K562 (cell line): ENCODE measurements at regions of chr9 and their contacts with region 1.

Region 1: DNA sequence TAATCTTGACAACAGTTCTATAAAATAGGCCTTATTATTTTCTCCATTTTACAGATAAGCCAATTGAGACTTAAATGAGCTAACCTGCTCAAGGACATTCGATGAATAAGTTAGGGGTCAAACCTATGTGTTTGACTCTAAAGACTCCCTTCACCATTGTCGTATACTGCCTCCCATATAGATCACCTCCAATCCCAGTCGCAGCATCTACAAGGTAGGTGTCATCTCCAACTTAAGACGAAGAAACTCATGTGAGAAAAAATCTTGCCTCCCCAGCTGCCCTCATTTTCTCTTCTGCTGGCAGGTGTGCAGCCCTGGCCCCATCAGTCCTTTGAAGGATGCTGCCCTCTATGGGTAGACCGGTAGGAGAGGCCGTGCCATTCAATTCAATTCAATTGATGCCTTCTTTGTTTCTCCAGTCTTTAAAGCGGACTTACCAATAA is 75.2 kb upstream of the SMARCA2 start:
- DNase-seq: peak in 3 of 4 experiments; percentile 7 to 26 (median 12)
- ATAC-seq: peak; percentile 76
- H3K4me3 ChIP-seq: no peak overlapping the region
- H3K27ac ChIP-seq: no peak overlapping the region
- H3K4me1 ChIP-seq: no peaks in the 10 kb centered on the region
- H3K27me3 ChIP-seq: no peaks in the 10 kb centered on the region
- CTCF ChIP-seq: peak; percentile 41 to 57 (median 51)
- EP300 ChIP-seq: no peak
- POLR2A ChIP-seq: no peak
- RAD21 ChIP-seq: peak; percentile 7 to 43; a peak in 2 of 4 replicates

Region 2: DNA sequence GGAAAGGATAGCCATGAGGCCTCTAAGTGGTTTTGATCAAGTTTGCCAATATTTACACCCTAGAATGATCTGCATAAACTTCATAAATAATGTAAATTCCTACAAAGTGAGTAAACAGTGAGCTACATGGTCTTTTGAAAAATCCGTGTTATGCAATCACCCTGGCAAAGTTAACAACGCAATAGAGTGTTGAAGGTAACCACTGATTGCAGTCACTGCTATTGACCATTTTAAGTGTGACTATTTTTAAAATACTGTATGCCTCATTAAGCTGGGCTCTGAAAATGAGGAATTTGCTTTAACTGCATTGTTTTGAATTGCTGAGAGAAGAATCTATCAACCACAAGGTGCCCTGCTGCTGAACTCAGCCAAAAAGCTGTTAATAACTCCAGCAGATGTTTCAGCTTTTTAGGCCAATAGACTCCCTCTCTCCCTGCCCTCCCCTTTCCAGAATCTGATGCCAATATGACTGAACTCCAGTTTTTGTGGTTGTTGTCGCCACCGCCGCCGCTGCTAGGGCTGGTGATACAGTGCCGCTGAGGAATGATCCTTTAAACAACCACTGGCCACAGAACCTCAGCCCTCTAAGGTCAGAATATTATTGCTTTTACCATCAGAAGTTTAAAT is 39.9 kb after region 1 on chr9:
- CTCF ChIA-PET with region 1: no interaction called
- POLR2A ChIA-PET with region 1: no interaction called
- in situ Hi-C with region 1: no loop called
- intact Hi-C with region 1: no loop called
- DNase-seq: no peak
- ATAC-seq: no peak
- H3K4me3 ChIP-seq: no peak overlapping the region
- H3K27ac ChIP-seq: no peak overlapping the region
- H3K4me1 ChIP-seq: no peaks in the 10 kb centered on the region
- H3K27me3 ChIP-seq: no peaks in the 10 kb centered on the region; a peak in 2 of 5 replicates
- CTCF ChIP-seq: no peak
- EP300 ChIP-seq: no peak
- POLR2A ChIP-seq: no peak
- RAD21 ChIP-seq: no peak

Region 3: GRCh38 chr9:1995084-1995483 is 55.1 kb after region 1 on chr9:
- CTCF ChIA-PET with region 1: no interaction called
- POLR2A ChIA-PET with region 1: no interaction called
- in situ Hi-C with region 1: no loop called
- intact Hi-C with region 1: no loop called
- DNase-seq: no peak
- ATAC-seq: no peak
- H3K4me3 ChIP-seq: no peak overlapping the region
- H3K27ac ChIP-seq: no peak overlapping the region
- H3K4me1 ChIP-seq: no peaks in the 10 kb centered on the region
- H3K27me3 ChIP-seq: peaks cover 0 to 7% of the 10 kb centered on the region in 2 experiments; a peak in 3 of 5 replicates
- CTCF ChIP-seq: no peak
- EP300 ChIP-seq: no peak
- POLR2A ChIP-seq: no peak
- RAD21 ChIP-seq: no peak

Region 4: GRCh38 chr9:2072752-2073405 is 132.9 kb after region 1 on chr9:
- CTCF ChIA-PET with region 1: no interaction called
- POLR2A ChIA-PET with region 1: no interaction called
- in situ Hi-C with region 1: no loop called
- intact Hi-C with region 1: no loop called
- DNase-seq: no peak
- ATAC-seq: no peak
- H3K4me3 ChIP-seq: no peak overlapping the region
- H3K27ac ChIP-seq: no peak overlapping the region
- H3K4me1 ChIP-seq: no peaks in the 10 kb centered on the region
- H3K27me3 ChIP-seq: no peaks in the 10 kb centered on the region
- CTCF ChIP-seq: no peak
- EP300 ChIP-seq: no peak
- POLR2A ChIP-seq: no peak
- RAD21 ChIP-seq: no peak

Region 5: GRCh38 chr9:2087500-2088313 is 147.8 kb after region 1 on chr9:
- CTCF ChIA-PET with region 1: no interaction called
- POLR2A ChIA-PET with region 1: no interaction called
- in situ Hi-C with region 1: no loop called
- intact Hi-C with region 1: loop called (anchors 10 kb)
- DNase-seq: peak; percentile 30 to 50 (median 40)
- ATAC-seq: peak; percentile 83
- H3K4me3 ChIP-seq: no peak overlapping the region
- H3K27ac ChIP-seq: no peak overlapping the region
- H3K4me1 ChIP-seq: no peaks in the 10 kb centered on the region
- H3K27me3 ChIP-seq: no peaks in the 10 kb centered on the region
- CTCF ChIP-seq: peak in 2 of 3 experiments; percentile 46 to 50; a peak in 3 of 6 replicates
- EP300 ChIP-seq: no peak
- POLR2A ChIP-seq: no peak
- RAD21 ChIP-seq: peak; percentile 43 to 52